OCI-LY7 (cell line): ENCODE measurements at regions of chr2 and their contacts with region 1.

Region 1: DNA sequence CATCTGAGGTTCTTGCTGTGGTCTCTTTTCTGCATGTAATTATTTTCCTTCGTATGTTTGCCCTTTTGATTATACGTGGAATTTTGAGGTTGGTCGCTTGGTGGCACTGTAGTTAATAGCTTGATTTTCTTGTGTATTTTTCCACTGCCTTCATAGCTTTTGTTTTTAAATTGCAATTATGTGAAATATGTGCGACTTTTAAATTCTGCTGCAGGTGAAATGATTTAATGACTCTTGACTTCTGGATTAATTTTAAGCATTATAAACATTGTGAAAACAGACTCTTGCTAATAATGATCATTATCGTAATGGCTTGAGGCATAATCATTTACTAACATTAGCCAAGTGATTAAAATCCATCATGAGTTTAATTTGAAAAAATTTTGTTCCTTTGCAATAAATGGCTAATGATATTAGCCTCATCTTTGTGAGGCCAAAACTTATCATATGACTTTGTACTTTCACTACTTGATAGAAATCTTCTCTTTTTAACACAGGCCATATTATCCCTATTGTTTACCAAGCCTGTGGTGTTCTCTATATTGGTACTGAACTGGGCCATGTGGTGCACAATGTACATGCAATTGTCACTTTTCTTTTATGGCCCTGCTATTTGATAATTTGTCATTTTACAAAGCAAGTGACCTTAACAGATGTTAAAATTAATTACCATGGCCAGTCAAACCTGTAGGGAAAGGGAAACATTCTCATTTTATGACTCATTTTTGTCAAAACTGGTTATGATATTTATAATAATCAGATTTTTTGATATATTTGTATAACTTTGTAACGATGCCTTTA is 62.8 kb upstream of the NEUROD1 start:
- DNase-seq: peak; percentile 46
- H3K4me3 ChIP-seq: no peak overlapping the region
- H3K27ac ChIP-seq: no peak overlapping the region
- H3K4me1 ChIP-seq: no peaks in the 10 kb centered on the region
- CTCF ChIP-seq: peak; percentile 91

Region 2: GRCh38 chr2:181780047-181780651 is 37.0 kb after region 1 on chr2:
- CTCF ChIA-PET with region 1: no interaction called
- POLR2A ChIA-PET with region 1: no interaction called
- intact Hi-C with region 1: no loop called
- DNase-seq: no peak
- H3K4me3 ChIP-seq: no peak overlapping the region
- H3K27ac ChIP-seq: no peak overlapping the region
- H3K4me1 ChIP-seq: peaks cover under 1% of the 10 kb centered on the region
- CTCF ChIP-seq: no peak

Region 3: GRCh38 chr2:181790716-181791649 is 47.9 kb after region 1 on chr2:
- CTCF ChIA-PET with region 1: no interaction called
- POLR2A ChIA-PET with region 1: no interaction called
- intact Hi-C with region 1: no loop called
- DNase-seq: no peak
- H3K4me3 ChIP-seq: no peak overlapping the region
- H3K27ac ChIP-seq: no peak overlapping the region
- H3K4me1 ChIP-seq: no peaks in the 10 kb centered on the region
- CTCF ChIP-seq: no peak

Region 4: GRCh38 chr2:181904022-181904632 is 161.0 kb after region 1 on chr2:
- CTCF ChIA-PET with region 1: no interaction called
- POLR2A ChIA-PET with region 1: no interaction called
- intact Hi-C with region 1: loop called (anchors 5 kb)
- DNase-seq: peak; percentile 42
- H3K4me3 ChIP-seq: no peak overlapping the region
- H3K27ac ChIP-seq: no peak overlapping the region
- H3K4me1 ChIP-seq: peaks cover 15% of the 10 kb centered on the region
- CTCF ChIP-seq: peak; percentile 91

Region 5: DNA sequence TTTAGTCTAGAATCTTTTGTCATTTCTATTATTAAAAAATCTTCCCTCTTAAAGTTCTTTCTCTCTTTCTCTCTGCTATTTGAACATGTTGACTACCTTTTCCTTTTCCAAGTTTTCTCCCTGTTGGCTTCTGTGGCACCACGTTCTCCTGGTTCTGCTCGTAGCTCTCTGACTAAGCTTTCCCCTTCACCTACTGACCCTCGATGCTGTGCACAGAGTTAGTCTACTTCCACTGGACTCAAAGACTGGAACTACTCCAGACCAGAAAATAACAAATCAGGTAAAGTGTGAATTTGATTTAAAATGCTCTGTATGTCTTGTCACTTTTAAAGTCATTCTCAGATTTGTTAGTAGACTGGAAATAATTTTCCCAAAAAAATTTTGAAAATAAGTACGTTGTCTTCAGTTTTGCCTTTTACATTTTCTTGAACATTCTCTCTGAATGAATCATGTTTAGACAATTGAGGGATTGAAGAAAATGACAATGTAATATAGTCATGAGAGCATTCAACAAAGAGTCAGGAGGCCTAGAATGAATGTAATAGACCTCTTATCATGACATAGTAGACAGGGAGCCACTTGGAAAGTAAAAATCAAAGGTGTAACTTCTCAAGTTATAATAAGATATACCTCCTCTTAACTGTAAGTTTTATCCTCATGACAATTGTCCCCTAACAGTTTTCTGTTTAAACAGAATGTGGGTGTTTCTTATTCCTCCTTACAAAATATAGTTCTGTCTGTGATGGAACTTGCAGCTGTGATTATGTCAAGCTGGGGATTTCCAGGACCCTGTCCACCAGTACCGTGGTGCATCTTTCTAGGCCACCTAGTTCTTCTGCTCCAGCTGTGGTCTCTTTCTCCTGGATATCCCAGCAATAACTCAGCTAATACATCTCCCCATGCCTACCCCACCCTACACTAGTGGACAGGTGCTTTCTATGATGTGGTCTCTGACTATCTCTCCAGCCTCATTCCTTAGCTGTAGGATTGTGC is 173.9 kb after region 1 on chr2:
- CTCF ChIA-PET with region 1: no interaction called
- POLR2A ChIA-PET with region 1: no interaction called
- intact Hi-C with region 1: no loop called
- DNase-seq: no peak
- H3K4me3 ChIP-seq: no peak overlapping the region
- H3K27ac ChIP-seq: no peak overlapping the region
- H3K4me1 ChIP-seq: no peaks in the 10 kb centered on the region
- CTCF ChIP-seq: no peak

Region 6: DNA sequence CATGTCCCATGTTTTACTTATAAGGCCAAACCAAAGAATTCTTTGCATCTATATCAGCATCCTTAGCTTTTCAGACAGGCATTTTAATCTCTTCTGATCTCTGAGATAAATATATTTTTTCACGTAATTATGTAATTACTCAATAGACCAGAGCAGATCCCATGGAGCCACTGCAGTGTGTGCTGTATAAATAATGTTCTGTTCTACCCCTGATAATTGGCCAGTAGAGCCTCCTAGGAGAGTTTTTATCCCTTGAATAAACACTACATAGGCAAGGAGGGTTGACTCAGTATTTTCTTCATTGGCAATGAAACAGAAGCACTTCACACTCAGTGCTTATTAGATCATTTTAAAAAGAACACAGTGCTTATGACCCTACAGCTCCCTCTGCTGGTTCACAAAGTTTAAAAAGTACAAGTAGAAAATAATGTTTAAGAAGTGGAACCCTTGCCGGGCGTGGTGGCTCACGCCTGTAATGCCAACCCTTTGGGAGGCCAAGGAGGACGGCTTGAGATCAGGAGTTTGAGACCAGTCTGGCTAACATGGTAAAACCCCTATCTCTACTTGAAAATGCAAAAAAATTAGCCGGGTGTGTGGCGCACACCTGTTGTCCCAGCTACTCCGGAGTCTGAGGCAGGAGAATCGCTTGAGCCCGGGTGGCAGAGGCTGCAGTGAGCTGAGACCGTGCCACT is 334.5 kb after region 1 on chr2:
- CTCF ChIA-PET with region 1: no interaction called
- POLR2A ChIA-PET with region 1: no interaction called
- intact Hi-C with region 1: loop called (anchors 1 kb)
- DNase-seq: peak; percentile 64
- H3K4me3 ChIP-seq: no peak overlapping the region
- H3K27ac ChIP-seq: no peak overlapping the region
- H3K4me1 ChIP-seq: no peaks in the 10 kb centered on the region
- CTCF ChIP-seq: peak; percentile 78